SK-MEL-5 (cell line): ENCODE measurements at regions of chr20 and their contacts with region 1.

Region 1: GRCh38 chr20:1437235-1437904 is 29.3 kb downstream of the NSFL1C start:
- DNase-seq: peak; percentile 87

Region 2: GRCh38 chr20:1313236-1313964 is 124.0 kb before region 1 on chr20:
- in situ Hi-C with region 1: loop called (anchors 25 kb)
- DNase-seq: peak; percentile 84

Region 3: DNA sequence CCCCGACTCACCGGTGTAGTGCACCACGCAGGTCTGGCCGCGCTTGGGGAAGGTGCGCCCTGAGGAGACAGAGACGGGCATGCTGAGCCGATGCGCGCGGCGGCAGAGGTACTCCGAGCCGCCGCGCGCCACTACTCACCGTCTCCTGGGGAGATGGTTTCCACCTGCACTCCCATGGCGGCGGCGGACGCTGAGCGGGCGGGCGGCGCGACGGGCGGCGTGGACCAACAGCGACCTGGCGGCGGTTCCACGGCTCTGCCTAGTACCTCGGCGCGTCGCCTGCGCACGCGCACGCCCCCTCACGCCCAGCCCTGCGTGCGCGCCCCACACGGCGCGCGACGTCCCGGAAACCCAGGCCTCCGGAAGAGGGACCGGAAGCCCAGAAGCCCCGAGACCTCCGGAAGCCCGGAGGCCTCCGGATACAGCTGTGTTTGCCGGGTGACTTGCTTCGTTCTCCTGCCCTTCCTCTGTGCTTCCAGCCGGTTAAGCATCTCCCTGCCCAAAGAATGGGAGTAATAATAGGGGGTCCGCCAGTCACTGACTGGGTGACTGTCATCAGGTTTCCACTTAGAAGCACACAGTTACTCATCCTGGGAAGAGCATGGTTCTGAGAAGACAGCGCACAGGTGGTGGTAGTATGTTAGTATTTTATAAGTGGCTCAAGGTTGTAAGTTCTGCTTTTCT is 44.4 kb before region 1 on chr20 and contains the start of gene FKBP1A:
- in situ Hi-C with region 1: loop called (anchors 10 kb)
- DNase-seq: peak; percentile 93
- total RNA-seq, gene FKBP1A: 219 and 227 TPM in 2 replicates

Region 4: DNA sequence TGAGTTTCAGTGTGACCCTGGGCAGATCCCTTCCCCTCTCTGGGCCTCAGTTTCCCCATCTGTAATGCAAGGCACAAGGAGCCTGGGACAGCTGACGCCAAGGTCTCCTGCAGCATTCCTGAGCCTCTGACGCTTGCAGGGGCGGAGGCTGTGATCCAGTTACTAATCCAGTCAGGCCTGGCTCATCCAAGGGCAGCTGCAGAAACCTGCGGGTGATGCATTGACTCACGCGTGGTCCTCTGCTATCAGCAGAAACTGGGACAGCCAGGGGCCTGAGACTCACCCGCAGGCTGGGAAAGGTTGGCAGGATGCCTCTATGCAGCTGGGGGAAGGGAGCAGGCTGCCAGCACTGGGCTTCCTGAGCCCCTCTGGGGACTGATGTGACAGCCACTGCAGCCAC is 392.9 kb after region 1 on chr20:
- in situ Hi-C with region 1: no loop called
- DNase-seq: no peak